Heart right ventricle (tissue), 16 donors: ENCODE measurements at regions of chr3 and their contacts with region 1.

Region 1: GRCh38 chr3:129160891-129161859 is at the start of gene ISY1:
- DNase-seq: peak; percentile 87 to 94
- ATAC-seq: peak; percentile 91 to 98 (median 95)
- H3K4me3 ChIP-seq: peak within 1 kb of the TSS; percentile 68 to 95 (median 78)
- H3K27ac ChIP-seq: peak within 1 kb of the TSS; percentile 72 to 99 (median 92)
- H3K4me1 ChIP-seq: peaks cover 8 to 33% (median 21%) of the 10 kb centered on the region in 9 donors
- H3K27me3 ChIP-seq: no peaks in the 10 kb centered on the region
- CTCF ChIP-seq: peak; percentile 44 to 83 (median 75)
- total RNA-seq, gene ISY1: 26.7 to 35.4 (median 29.7) TPM

Region 2: GRCh38 chr3:128598884-128599664 is 562.1 kb before region 1 on chr3:
- intact Hi-C with region 1: no loop called
- DNase-seq: no peak
- ATAC-seq: no peak
- H3K4me3 ChIP-seq: no peak overlapping the region
- H3K27ac ChIP-seq: no peak overlapping the region
- H3K4me1 ChIP-seq: peaks cover 0 to 18% (median 0%) of the 10 kb centered on the region in 9 donors
- H3K27me3 ChIP-seq: no peaks in the 10 kb centered on the region
- CTCF ChIP-seq: no peak

Region 3: GRCh38 chr3:129087138-129087702 is 74.0 kb before region 1 on chr3:
- intact Hi-C with region 1: no loop called
- DNase-seq: peak; percentile 33 to 54
- ATAC-seq: peak; percentile 43 to 84 (median 75)
- H3K4me3 ChIP-seq: no peak overlapping the region
- H3K27ac ChIP-seq: peak overlapping the region; percentile 55 to 93 (median 82)
- H3K4me1 ChIP-seq: peaks cover 4 to 13% (median 8%) of the 10 kb centered on the region in 9 donors
- H3K27me3 ChIP-seq: no peaks in the 10 kb centered on the region
- CTCF ChIP-seq: no peak

Region 4: DNA sequence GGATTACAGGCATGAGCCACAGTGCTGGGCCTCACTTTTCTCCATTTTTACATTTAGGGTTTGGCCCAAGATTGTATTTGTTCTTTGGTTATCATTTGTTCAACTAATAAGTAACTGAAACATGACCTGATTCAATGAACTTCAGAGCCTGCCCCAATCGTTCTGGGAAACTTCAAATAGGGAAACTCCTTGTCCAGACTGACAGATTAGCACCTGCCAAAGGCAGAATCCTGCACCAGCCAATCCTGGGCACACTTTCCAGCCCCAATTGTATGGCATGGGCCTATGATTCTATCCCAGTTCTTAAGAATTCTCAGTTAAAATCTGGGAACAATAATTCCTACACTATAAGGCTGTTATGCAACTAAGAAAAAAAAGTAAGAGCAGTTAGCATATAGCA is 21.3 kb before region 1 on chr3:
- intact Hi-C with region 1: no loop called
- DNase-seq: no peak
- ATAC-seq: no peak
- H3K4me3 ChIP-seq: no peak overlapping the region
- H3K27ac ChIP-seq: no peak overlapping the region
- H3K4me1 ChIP-seq: no peaks in the 10 kb centered on the region
- H3K27me3 ChIP-seq: no peaks in the 10 kb centered on the region
- CTCF ChIP-seq: no peak

Region 5: DNA sequence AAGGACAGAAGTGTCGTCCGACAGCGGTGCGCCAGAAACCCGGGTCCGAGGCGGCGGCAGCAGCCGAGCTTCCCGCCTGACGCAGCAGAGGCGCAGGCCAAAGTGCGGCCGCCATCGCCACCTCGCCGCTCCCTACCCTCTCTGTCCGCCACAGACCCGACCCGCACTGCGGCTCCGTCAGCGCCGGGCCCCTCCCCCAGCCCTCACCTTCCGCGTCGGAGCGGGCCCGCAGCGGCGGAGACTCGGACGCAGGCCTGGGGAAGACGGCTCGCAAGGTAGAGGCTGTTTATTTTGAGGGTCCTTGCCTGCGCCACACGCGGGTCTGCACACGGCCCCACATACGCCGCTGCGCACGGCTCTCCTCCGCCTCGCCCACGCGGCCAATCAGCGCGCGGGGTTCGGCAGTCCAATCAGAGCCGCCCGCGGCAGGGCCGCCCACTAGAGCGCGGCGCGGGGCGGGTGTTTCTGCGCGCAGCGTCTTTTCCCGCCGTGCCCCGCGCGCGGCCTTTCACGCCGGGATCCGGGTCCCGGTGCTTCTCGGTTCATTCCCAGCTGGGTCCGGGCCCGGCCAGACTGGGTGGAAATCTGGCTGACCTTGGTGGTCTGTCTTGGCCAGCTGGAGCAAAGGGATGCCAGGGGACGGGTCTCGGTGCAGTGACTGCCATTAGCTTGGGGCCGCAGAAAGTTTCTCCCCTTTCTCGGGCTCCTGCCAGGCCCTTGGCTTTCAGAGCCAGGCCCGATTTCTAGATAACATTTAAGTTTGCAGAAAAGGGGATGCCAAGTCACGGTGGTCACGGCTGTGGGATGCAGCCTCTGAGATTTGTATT is 22.6 kb after region 1 on chr3 and contains the start of gene CNBP:
- intact Hi-C with region 1: loop called in 1 of 10 experiments (anchors 1 kb)
- DNase-seq: peak; percentile 94
- ATAC-seq: peak; percentile 98 to 99 (median 99)
- H3K4me3 ChIP-seq: peak within 1 kb of the TSS; percentile 75 to 97 (median 92)
- H3K27ac ChIP-seq: peak within 1 kb of the TSS; percentile 94 to 100 (median 99)
- H3K4me1 ChIP-seq: peaks cover 7 to 68% (median 52%) of the 10 kb centered on the region in 9 donors
- H3K27me3 ChIP-seq: no peaks in the 10 kb centered on the region
- CTCF ChIP-seq: peak in 1 of 9 donors; percentile 8
- total RNA-seq, gene CNBP: 438 to 594 (median 487) TPM

Region 6: DNA sequence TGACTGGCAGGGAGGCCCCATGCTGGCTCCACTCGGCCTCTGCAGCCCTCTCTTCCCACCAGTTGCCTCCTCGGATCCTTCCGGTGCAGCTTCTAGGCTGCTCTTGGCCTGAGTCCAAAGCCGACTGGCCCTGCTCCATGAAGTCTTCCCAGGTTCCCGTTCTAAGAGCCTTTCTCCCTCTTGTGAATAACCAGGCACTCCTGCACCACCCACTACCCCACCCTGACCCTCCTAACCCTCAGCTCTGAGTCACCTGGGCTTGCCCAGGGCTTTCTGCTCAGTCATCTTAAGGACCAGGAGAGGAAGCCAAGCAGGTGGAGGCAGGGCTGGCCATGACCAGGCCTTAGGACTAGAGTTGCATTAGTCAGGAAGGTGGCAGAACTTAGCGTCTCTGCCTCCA is 50.6 kb after region 1 on chr3:
- intact Hi-C with region 1: no loop called
- DNase-seq: peak; percentile 46 to 71
- ATAC-seq: peak in 7 of 8 donors; percentile 62 to 89 (median 76)
- H3K4me3 ChIP-seq: no peak overlapping the region
- H3K27ac ChIP-seq: peak overlapping the region in 3 of 10 donors; percentile 15 to 64 (median 15)
- H3K4me1 ChIP-seq: peaks cover 0 to 20% (median 11%) of the 10 kb centered on the region in 9 donors
- H3K27me3 ChIP-seq: no peaks in the 10 kb centered on the region
- CTCF ChIP-seq: no peak